CD8-positive, alpha-beta T cell (primary cell): ENCODE measurements at regions of chr19 and their contacts with region 1.

Region 1: GRCh38 chr19:5967994-5968430 is 9.9 kb downstream of the RANBP3 start:
- DNase-seq: peak in 8 of 9 experiments; percentile 46 to 81 (median 68)
- ATAC-seq: peak; percentile 81
- H3K4me3 ChIP-seq: no peak overlapping the region
- H3K4me3 Mint-ChIP-seq: peak overlapping the region; percentile 50
- H3K27ac ChIP-seq: no peak overlapping the region
- H3K27ac Mint-ChIP-seq: peak overlapping the region; percentile 83
- H3K4me1 ChIP-seq: peaks cover 89% of the 10 kb centered on the region
- H3K4me1 Mint-ChIP-seq: peaks cover 86% of the 10 kb centered on the region
- H3K27me3 ChIP-seq: no peaks in the 10 kb centered on the region
- H3K27me3 Mint-ChIP-seq: no peaks in the 10 kb centered on the region
- CTCF ChIP-seq: peak; percentile 94

Region 2: DNA sequence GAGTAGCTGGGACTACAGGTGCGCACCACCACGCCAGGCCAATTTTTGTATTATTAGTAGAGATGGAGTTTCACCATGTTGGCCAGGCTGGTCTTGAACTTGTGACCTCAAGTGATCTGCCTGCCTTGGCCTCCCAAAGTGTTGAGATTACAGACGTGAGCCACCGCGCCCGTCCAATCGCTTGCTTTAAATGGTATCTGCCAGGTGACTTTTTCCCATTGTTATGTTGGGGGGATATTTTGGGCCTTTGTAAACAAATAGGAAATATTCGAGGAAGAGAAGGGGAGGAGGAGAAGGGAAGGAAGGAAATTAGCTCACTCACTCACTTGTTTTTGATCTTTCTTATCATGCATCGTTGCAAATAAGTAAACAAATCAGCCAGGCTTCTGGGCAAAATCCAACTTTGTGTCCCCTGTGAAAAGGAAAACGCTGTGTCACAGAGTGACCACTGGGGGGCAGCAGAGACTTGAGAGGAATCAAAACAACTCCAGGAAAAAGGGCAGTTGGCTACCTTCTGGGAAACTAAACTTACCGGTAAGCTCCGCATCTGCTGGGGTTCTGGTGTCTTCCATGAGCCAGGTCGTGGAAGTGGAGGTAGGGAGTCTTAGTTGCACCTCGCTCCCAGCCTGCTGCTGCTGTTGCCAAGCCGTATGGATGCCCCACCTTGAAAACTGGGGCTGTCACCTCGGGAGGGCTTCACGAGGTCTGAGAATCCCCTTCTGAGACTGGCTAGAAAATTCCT is 19.2 kb after region 1 on chr19:
- CTCF ChIA-PET with region 1: interaction called, 61 read pairs
- POLR2A ChIA-PET with region 1: no interaction called
- intact Hi-C with region 1: loop called (anchors 1 kb)
- DNase-seq: peak; percentile 41 to 85 (median 74)
- ATAC-seq: peak; percentile 71
- H3K4me3 ChIP-seq: peak overlapping the region; percentile 36 to 41
- H3K4me3 Mint-ChIP-seq: peak overlapping the region; percentile 79
- H3K27ac ChIP-seq: no peak overlapping the region
- H3K27ac Mint-ChIP-seq: no peak overlapping the region
- H3K4me1 ChIP-seq: peaks cover 5% of the 10 kb centered on the region
- H3K4me1 Mint-ChIP-seq: peaks cover 26% of the 10 kb centered on the region
- H3K27me3 ChIP-seq: no peaks in the 10 kb centered on the region
- H3K27me3 Mint-ChIP-seq: no peaks in the 10 kb centered on the region
- CTCF ChIP-seq: peak; percentile 93